Head of caudate nucleus (tissue), 42 donors: ENCODE measurements at regions of chr12 and their contacts with region 1.

Region 1: DNA sequence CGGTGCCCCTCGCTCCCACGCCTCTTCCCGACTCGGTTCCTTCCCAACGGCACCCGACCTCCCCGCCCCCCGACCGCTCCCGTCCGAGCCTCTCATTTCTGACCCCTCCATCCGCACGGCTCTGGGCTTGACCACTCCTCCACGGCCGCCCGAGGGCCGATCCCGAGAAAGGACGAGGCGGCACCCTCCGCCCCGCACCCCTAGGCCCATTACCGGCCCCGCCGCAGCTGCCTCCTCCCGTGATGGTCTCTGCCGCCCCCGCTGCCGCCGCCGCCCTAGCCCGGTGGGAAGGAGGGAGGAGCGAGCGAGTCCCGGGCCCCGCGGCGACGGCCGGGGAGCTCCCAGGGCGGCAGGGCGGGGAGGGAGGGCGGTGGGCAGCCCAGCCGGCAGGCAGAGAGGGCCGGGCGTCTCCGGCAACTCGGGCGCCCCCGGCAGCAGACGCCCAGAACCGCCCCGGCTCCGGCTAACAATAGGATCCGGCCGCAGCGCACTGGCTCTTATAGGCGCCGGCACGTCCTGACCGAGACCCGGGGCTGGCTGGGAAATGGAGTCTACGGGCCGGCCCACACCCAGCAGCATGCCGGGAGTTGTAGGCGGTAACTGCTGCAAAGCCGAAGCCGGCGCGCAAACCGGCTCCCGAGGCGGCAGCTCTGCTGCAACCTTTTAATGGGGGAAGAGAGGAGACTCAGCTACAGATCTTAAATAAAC is at the start of gene CSRNP2:
- DNase-seq: peak; percentile 96 to 100 (median 99)

Region 2: DNA sequence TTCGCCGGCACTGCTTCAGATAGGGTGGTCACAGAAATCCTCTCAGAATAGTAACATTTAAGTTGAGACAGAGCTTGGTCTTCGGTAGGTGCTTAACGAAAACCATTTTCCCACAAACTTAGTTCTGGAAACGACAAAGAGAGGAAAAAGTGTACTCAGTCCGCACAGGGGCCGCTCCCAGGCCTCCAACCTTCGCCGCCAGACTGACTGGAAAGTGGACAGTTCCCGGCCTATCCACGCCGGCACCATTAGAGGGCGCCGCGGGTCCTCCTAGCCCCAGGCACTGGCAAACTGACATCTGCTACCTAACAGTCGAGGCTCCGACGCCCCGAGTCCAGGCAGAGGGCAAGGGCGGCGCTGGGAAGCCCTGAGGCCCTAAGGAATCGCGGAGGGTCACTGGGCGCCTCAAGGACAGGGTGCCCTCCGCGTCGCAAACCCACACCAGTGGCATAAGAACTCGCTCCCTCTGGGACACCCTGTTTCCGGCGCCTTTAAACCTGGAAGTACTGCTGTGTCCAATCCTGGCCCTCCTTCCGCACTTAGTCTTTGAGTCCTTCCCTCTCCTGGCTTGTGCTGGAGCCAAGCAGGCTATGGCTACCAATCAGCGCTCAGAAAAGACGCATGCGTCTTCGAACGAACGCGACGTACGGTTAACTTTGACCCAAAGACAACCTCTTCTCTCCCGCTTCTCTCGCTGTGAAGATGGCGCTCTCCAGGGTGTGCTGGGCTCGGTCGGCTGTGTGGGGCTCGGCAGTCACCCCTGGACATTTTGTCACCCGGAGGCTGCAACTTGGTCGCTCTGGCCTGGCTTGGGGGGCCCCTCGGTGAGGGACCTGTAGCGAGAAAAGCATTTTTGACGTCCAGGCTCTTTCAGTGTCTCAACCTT is 35.4 kb before region 1 on chr12 and contains the start of gene LETMD1:
- intact Hi-C with region 1: loop called (anchors 2 kb)
- DNase-seq: peak; percentile 90 to 98 (median 96)

Region 3: DNA sequence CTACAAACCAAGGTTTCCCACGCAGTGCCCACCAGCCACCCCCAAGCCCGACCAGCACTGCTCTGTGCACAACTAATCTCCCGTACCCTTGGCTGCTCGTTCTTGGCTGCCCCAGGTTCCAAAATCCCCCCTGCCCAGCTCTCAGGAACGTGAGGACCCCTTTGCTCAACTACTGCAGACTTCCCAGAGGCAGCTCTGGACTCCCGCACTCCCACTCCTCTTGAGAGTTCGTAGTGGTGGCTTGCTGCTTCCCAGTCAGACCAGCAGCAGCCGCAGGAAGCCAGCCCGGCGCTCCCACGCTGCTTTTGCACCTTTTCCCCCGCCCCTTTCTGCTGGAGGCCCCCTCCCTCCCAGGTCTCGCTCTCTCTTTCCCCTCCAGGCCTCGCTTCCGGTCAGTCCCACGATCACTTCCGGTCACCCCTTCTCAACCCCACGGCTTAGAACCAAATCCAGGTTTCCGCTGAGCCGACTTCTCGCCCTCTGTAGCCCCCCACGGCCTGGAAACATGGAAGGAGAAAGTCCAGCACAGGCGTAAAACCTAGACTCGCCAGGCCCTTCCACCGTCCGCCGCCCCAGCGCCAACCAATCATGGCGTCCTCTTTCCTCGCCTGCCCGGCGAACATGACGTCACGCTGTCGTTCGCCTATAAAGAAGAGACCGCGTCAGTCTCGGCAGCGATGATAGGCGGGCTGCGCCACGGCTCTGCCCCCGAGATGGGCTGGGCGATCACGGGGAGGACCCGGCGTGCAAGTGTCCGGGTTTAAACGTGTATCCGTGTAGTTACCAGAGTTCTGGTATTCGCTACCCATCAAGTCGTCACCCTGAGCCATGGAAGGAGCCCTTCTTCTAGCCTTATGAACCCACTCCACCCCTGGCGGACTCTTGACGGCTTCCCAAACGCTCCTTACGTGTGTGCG is 89.5 kb after region 1 on chr12 and contains the start of gene TFCP2:
- intact Hi-C with region 1: loop called (anchors 10 kb)
- DNase-seq: peak; percentile 94 to 99 (median 97)

Region 4: GRCh38 chr12:51238510-51239334 is 155.4 kb after region 1 on chr12 and contains the start of gene DAZAP2:
- intact Hi-C with region 1: loop called (anchors 10 kb)
- DNase-seq: peak; percentile 91 to 98 (median 97)